ENCODE measurements at regions of chr12 and their contacts with region 1.

Region 1: DNA sequence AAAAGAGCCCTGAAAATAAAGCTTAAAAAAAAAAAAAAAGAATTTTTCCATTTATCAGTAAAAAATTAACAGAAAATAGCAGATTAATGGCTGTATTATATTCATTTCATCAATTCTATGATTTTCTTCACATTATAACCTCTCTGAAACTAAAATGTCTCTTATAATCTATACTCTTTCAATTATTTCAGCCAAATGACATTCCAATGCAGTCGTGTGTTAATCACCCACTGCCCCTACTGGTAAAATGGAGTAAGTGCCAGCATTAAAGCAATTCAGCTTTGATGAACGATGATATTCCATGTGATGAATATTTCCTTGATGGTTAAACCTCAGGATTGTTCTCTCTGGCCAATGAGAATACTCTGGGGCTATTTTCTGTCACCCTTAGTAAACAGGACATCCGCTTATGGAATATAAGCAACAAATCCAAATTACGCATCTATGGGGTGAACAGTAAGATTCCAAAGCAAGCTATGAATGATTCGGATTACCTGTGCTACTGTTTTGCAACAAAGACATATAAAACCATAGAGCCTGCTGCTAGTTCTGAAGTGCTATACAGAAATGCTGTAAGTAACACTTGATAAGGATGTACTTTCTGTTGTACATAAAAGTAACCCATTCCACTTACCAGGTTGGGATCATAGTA is 20.3 kb upstream of the SYCP3 start:
- DNase-seq: no peak
- ATAC-seq: peak in 2 of 4 donors; percentile 30 to 38
- H3K4me3 ChIP-seq: no peak overlapping the region
- H3K27ac ChIP-seq: no peak overlapping the region
- H3K4me1 ChIP-seq: peaks cover 0 to 26% (median 0%) of the 10 kb centered on the region in 12 donors
- H3K27me3 ChIP-seq: no peaks in the 10 kb centered on the region
- CTCF ChIP-seq: peak; percentile 48 to 76 (median 66)
- POLR2A ChIP-seq: no peak

Region 2: DNA sequence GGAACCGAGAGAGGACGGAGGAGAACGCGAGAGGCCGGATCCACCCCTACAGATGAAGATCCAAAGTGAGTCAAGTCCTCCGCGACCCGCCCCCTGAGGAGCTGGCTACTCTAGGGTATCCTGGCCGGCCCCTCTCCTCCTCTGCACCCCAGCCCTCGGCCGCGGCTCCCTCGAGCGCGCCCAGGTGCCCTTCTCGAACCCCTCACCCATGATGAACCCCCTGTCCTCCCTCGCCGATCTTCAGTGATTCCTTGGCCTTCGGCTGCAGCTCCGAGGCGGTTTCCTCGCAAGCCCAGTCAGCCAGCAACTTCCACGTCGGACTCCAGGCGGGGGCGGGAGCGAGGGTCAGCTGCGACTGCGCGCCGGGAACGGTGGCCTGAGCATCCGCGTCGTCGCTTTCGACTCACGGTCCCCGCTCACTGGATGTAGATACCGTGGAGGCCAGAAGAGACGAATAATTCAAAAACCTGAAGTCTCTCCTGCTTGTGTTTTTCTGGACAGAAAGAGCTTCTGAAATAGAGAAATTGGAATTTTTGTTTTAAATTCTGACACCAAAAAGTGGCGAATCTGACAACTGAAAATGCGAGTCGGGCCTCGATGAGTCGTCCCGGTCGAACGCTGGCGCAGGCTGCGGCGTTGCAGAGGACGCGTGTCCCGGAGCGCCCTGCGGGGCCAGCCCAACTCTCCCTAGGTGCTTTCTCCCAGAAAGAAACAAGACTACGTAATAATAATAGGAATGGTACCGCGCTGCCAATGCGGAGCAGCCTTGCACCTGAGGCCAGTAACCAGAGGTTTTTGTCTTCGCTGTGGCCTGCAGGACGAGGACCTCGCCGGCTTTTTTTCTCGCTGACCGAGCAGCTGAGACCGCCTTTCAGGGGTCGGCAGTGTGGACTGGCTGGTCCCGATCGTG is 351.8 kb before region 1 on chr12 and contains the start of gene ARL1:
- intact Hi-C with region 1: loop called in 2 of 10 experiments (anchors 5 to 10 kb)
- DNase-seq: peak; percentile 86 to 93 (median 90)
- ATAC-seq: peak; percentile 92 to 97 (median 96)
- H3K4me3 ChIP-seq: peak within 1 kb of the TSS; percentile 47 to 92 (median 78)
- H3K27ac ChIP-seq: peak within 1 kb of the TSS; percentile 79 to 97 (median 92)
- H3K4me1 ChIP-seq: peaks cover 5 to 28% (median 18%) of the 10 kb centered on the region in 12 donors
- H3K27me3 ChIP-seq: no peaks in the 10 kb centered on the region
- CTCF ChIP-seq: no peak
- POLR2A ChIP-seq: peak in 1 of 2 donors; percentile 22
- total RNA-seq, gene ARL1: 69.1 to 115 (median 93.7) TPM

Region 3: GRCh38 chr12:101414533-101415119 is 344.9 kb before region 1 on chr12:
- intact Hi-C with region 1: loop called in 3 of 10 experiments (anchors 5 to 10 kb)
- DNase-seq: peak in 1 of 5 donors; percentile 14
- ATAC-seq: no peak
- H3K4me3 ChIP-seq: no peak overlapping the region
- H3K27ac ChIP-seq: no peak overlapping the region
- H3K4me1 ChIP-seq: no peaks in the 10 kb centered on the region
- H3K27me3 ChIP-seq: no peaks in the 10 kb centered on the region
- CTCF ChIP-seq: peak; percentile 33 to 64 (median 51)
- POLR2A ChIP-seq: no peak

Region 4: DNA sequence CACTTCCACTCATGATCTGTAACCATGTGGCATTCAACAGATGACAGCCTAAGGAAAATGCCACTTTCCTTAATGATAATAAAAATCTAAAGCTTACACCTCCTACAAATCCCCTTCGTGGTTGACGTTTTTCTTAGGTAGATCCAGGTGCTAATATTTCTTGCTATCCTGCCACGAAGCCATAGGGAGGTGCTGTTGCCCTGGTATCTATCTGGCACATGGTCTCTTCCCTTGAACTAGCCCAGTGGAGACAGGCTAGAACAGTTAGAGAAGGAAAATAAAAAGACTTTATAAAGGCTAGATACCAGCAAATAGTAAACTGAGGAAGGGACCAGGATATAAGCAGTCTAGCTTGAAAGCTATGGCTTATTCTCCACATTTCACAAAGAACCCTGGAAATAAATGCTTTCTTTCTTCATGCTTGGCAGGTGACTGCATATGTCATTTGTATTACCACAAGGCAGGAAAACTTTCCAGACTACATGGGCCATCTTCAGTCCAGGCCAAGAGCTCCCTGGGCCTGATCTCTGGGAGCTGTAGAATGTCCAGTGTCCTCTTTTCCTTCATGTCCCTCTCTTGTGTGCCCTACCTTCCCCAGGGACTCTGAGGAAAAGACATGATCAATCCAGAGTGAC is 269.1 kb before region 1 on chr12:
- intact Hi-C with region 1: loop called in 1 of 10 experiments (anchors 5 kb)
- DNase-seq: no peak
- ATAC-seq: peak; percentile 47 to 85 (median 80)
- H3K4me3 ChIP-seq: no peak overlapping the region
- H3K27ac ChIP-seq: peak overlapping the region in 1 of 12 donors; percentile 13
- H3K4me1 ChIP-seq: peaks cover 0 to 14% (median 0%) of the 10 kb centered on the region in 12 donors
- H3K27me3 ChIP-seq: no peaks in the 10 kb centered on the region
- CTCF ChIP-seq: peak; percentile 11 to 55 (median 41)
- POLR2A ChIP-seq: no peak

Region 5: DNA sequence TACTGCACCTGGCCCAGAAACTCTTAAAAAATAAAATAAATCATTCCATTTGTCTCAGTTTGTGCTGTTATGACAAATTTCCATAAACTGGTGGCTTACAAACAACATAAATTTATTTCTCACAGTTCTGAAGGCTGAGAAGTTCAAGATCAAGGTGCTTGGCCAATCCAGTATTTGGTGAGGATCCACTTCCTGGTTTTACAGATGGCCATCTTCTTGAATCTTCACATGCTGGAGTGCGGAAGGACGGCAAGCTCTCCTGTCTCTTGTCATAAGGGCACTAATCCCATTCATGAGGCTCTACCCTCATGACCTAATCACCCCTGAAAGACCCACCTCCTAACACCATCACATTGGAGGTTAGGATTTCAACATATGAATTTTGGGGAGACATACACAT is 194.6 kb before region 1 on chr12:
- intact Hi-C with region 1: loop called in 1 of 10 experiments (anchors 10 kb)
- DNase-seq: no peak
- ATAC-seq: no peak
- H3K4me3 ChIP-seq: no peak overlapping the region
- H3K27ac ChIP-seq: no peak overlapping the region
- H3K4me1 ChIP-seq: peaks cover 0 to under 1% (median 0%) of the 10 kb centered on the region in 12 donors
- H3K27me3 ChIP-seq: peaks cover 0 to 32% (median 4%) of the 10 kb centered on the region in 9 donors
- CTCF ChIP-seq: no peak
- POLR2A ChIP-seq: no peak

Region 6: DNA sequence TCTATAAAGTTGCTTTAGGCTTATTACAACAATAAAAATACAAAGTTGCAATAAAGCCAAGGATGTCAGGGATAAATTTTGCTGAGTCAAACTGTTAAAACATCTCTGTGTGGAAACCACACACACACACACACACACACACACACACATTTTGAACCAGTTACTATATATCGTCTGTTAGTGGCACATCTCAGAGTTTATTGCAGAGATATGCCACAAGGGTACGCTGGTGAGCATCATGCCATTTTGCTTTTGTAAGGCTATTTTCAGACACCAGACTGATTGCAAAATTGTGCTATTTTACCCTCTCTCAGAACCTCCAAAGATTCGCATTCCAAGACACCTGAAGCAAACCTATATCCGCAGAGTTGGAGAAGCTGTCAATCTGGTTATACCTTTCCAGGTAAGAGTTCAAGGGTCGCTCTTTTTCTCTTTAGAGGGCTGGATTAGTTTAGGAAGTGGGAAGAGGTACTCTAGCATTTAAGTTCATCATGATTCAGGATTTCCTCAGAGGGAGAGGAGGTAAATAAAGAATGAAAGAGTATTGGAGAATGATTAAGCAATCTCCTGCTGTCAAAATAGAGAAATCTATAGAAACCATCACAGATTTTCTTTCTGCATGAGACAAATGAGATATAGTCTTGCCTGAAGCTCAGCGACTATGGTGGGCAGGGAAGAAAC is 89.4 kb before region 1 on chr12:
- intact Hi-C with region 1: loop called in 1 of 10 experiments (anchors 10 kb)
- DNase-seq: peak in 1 of 5 donors; percentile 21
- ATAC-seq: peak; percentile 46 to 81 (median 70)
- H3K4me3 ChIP-seq: no peak overlapping the region
- H3K27ac ChIP-seq: no peak overlapping the region
- H3K4me1 ChIP-seq: peaks cover 0 to 24% (median 0%) of the 10 kb centered on the region in 12 donors
- H3K27me3 ChIP-seq: peaks cover 0 to 6% (median 0%) of the 10 kb centered on the region in 9 donors
- CTCF ChIP-seq: peak in 11 of 12 donors; percentile 29 to 64 (median 55)
- POLR2A ChIP-seq: no peak

Measured in heart left ventricle (tissue), 16 donors.